MCF 10A (cell line): ENCODE measurements at regions of chr6 and their contacts with region 1.

Region 1: DNA sequence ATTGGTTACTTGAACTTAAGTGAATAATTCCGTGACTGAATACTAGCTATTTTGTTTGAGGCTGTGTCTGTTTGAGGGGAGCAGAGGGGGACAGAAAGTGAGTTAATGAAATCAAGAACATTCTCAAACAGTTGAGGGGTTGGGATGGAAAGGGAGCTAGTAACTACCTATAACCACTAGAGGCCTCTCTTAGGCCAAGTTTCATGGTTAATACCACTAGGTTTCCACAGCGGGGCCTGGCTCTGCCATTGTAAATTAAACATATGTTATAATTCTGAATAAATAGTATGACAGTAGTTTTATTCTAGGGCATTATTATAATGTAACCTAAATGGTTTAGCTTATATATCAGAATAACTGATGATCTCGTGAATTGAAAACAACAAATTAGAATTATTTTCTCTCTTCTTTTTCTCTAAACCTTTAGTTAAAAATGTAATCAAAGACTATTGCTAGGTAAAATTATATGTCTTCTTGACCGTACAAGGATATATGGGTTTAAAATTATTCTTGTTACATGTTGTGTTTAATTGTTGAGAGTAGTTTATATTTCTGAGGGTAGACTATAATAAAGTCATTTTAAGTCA is 108.1 kb downstream of the BCKDHB start:
- DNase-seq: peak; percentile 69
- H3K4me3 Mint-ChIP-seq: no peak overlapping the region
- H3K27ac Mint-ChIP-seq: no peak overlapping the region
- H3K4me1 Mint-ChIP-seq: no peaks in the 10 kb centered on the region
- H3K27me3 Mint-ChIP-seq: no peaks in the 10 kb centered on the region
- CTCF ChIP-seq: peak; percentile 85

Region 2: DNA sequence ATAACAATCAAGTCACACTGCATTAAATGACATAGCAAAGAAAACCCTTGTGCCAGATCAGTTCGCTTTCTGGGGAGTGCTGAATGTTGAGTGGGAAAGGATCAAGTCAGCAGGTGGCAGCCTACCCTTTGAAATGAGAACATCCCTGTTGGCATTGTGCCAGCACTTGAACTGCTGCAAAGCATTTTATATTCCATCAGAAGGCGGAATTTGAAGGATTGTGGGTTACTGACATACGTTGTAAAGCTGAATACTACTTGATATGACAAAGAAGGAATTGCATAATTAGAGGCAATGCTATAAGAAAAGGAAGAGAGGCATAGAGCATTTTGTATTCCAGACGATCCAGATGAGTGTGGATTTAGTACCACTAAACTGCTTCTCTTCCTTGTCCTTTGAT is 81.5 kb before region 1 on chr6:
- CTCF ChIA-PET with region 1: interaction called, 4 read pairs
- POLR2A ChIA-PET with region 1: no interaction called
- intact Hi-C with region 1: loop called (anchors 1 kb)
- DNase-seq: peak; percentile 75
- H3K4me3 Mint-ChIP-seq: no peak overlapping the region
- H3K27ac Mint-ChIP-seq: no peak overlapping the region
- H3K4me1 Mint-ChIP-seq: peaks cover 18% of the 10 kb centered on the region
- H3K27me3 Mint-ChIP-seq: no peaks in the 10 kb centered on the region
- CTCF ChIP-seq: peak; percentile 70

Region 3: GRCh38 chr6:80282913-80283554 is 68.5 kb after region 1 on chr6:
- CTCF ChIA-PET with region 1: no interaction called
- POLR2A ChIA-PET with region 1: no interaction called
- intact Hi-C with region 1: no loop called
- DNase-seq: peak; percentile 14
- H3K4me3 Mint-ChIP-seq: no peak overlapping the region
- H3K27ac Mint-ChIP-seq: no peak overlapping the region
- H3K4me1 Mint-ChIP-seq: peaks cover 16% of the 10 kb centered on the region
- H3K27me3 Mint-ChIP-seq: no peaks in the 10 kb centered on the region
- CTCF ChIP-seq: no peak

Region 4: GRCh38 chr6:80343511-80343910 is 129.0 kb after region 1 on chr6:
- CTCF ChIA-PET with region 1: no interaction called
- POLR2A ChIA-PET with region 1: no interaction called
- intact Hi-C with region 1: no loop called
- DNase-seq: no peak
- H3K4me3 Mint-ChIP-seq: no peak overlapping the region
- H3K27ac Mint-ChIP-seq: no peak overlapping the region
- H3K4me1 Mint-ChIP-seq: peaks cover 4% of the 10 kb centered on the region
- H3K27me3 Mint-ChIP-seq: no peaks in the 10 kb centered on the region
- CTCF ChIP-seq: no peak

Region 5: DNA sequence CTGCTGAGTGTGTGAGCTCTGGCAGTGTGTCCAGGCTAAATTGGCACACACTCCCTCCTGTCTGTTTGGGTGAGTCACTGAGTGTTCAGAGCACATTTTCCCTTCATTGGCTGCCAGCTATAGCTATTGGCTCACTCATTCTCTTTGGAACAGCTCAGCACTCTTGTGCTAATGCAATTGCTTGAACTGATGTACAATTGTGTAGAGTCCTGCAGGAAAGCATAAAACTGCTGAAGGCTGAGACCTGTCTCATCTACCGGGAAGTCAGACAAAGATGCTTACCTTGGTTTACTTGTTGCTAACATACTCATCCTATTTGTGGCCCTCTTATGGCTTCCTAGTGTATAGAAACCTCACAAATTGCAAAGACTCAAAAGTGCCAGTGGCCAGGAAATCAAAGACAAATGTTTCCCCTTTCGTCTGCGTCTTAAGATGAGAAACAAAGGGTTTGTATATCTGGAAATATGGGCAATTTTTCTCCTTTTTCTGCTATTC is 243.0 kb after region 1 on chr6:
- CTCF ChIA-PET with region 1: interaction called, 3 read pairs
- POLR2A ChIA-PET with region 1: no interaction called
- intact Hi-C with region 1: loop called (anchors 10 kb)
- DNase-seq: peak; percentile 98
- H3K4me3 Mint-ChIP-seq: no peak overlapping the region
- H3K27ac Mint-ChIP-seq: peak overlapping the region; percentile 30
- H3K4me1 Mint-ChIP-seq: peaks cover 58% of the 10 kb centered on the region
- H3K27me3 Mint-ChIP-seq: no peaks in the 10 kb centered on the region
- CTCF ChIP-seq: no peak

Region 6: GRCh38 chr6:80469977-80470376 is 255.4 kb after region 1 on chr6:
- CTCF ChIA-PET with region 1: no interaction called
- POLR2A ChIA-PET with region 1: no interaction called
- intact Hi-C with region 1: no loop called
- DNase-seq: no peak
- H3K4me3 Mint-ChIP-seq: no peak overlapping the region
- H3K27ac Mint-ChIP-seq: no peak overlapping the region
- H3K4me1 Mint-ChIP-seq: no peaks in the 10 kb centered on the region
- H3K27me3 Mint-ChIP-seq: no peaks in the 10 kb centered on the region
- CTCF ChIP-seq: no peak

Region 7: GRCh38 chr6:80594461-80594860 is 379.9 kb after region 1 on chr6:
- CTCF ChIA-PET with region 1: no interaction called
- POLR2A ChIA-PET with region 1: no interaction called
- intact Hi-C with region 1: no loop called
- DNase-seq: no peak
- H3K4me3 Mint-ChIP-seq: no peak overlapping the region
- H3K27ac Mint-ChIP-seq: no peak overlapping the region
- H3K4me1 Mint-ChIP-seq: no peaks in the 10 kb centered on the region
- H3K27me3 Mint-ChIP-seq: no peaks in the 10 kb centered on the region
- CTCF ChIP-seq: no peak

Region 8: GRCh38 chr6:80605165-80605989 is 390.8 kb after region 1 on chr6:
- CTCF ChIA-PET with region 1: interaction called, 6 read pairs
- POLR2A ChIA-PET with region 1: no interaction called
- intact Hi-C with region 1: loop called (anchors 1 kb)
- DNase-seq: peak; percentile 68
- H3K4me3 Mint-ChIP-seq: no peak overlapping the region
- H3K27ac Mint-ChIP-seq: peak overlapping the region; percentile 39
- H3K4me1 Mint-ChIP-seq: peaks cover 26% of the 10 kb centered on the region
- H3K27me3 Mint-ChIP-seq: no peaks in the 10 kb centered on the region
- CTCF ChIP-seq: peak; percentile 57

Region 9: DNA sequence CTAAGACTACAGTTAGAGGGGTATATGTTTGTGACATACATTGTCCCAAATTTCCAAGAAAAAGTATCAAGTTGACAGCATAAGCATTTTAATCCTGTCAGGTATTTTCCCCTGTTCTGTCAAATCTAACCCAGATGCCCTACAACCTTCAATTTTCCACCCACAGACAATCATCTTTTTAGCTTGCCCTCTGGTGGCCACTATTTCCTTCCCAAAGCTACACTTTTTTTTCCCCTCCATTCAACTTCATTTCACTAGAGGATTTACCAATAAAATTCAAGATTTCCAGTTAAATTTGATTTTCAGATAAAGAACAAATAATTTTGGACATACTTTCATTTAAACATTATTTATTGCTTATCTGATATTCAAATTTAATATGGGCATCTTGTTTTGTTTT is 1251.3 kb after region 1 on chr6:
- CTCF ChIA-PET with region 1: no interaction called
- POLR2A ChIA-PET with region 1: no interaction called
- intact Hi-C with region 1: loop called (anchors 1 kb)
- DNase-seq: peak; percentile 49
- H3K4me3 Mint-ChIP-seq: no peak overlapping the region
- H3K27ac Mint-ChIP-seq: no peak overlapping the region
- H3K4me1 Mint-ChIP-seq: no peaks in the 10 kb centered on the region
- H3K27me3 Mint-ChIP-seq: no peaks in the 10 kb centered on the region
- CTCF ChIP-seq: peak; percentile 48